CD8-positive, alpha-beta T cell (primary cell): ENCODE measurements at regions of chr3 and their contacts with region 1.

Region 1: DNA sequence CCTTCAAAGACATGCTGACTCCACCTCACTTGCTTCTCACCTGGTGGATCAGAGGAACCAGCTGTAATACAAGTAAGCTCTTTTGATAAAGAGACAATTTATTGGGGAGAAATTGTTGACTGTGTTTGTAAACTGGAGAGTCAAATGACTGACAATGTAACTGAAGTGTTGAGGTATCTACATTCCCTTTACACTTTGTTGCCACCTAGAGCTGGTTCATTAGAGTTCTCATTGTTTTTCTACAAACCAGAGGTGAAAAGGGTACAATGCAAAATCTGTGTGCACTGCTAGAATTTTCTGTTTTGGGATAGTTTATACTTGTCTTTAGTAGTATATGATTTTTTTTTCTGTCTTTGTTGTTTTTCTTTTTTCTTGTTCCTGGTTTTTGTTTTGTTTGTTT is 8.7 kb upstream of the LRRC58 start:
- DNase-seq: peak in 2 of 9 experiments; percentile 7 to 22
- ATAC-seq: no peak
- H3K4me3 ChIP-seq: no peak overlapping the region
- H3K4me3 Mint-ChIP-seq: no peak overlapping the region
- H3K27ac ChIP-seq: no peak overlapping the region
- H3K27ac Mint-ChIP-seq: no peak overlapping the region
- H3K4me1 ChIP-seq: no peaks in the 10 kb centered on the region
- H3K4me1 Mint-ChIP-seq: no peaks in the 10 kb centered on the region
- H3K27me3 ChIP-seq: no peaks in the 10 kb centered on the region
- H3K27me3 Mint-ChIP-seq: peaks cover 15% of the 10 kb centered on the region
- CTCF ChIP-seq: no peak

Region 2: DNA sequence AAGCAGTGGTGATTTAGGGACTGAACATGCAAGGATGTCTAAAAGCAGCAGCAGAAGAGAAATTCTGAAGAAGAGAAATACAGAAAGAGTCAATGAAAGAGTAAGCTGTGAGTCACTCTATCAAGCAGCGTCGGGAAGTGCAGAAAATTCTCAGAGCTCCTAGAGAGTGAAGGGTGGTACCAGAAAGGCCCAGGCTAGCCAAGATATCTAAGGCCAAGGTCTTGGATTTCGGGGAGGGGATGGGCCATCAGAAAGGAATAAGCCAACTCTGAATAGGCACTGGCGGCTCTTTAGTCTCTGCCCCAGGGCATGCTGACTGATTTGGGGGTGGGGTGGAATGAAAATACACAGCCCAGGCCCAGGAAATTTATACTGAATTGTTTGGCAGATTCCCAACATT is 143.6 kb before region 1 on chr3:
- CTCF ChIA-PET with region 1: no interaction called
- POLR2A ChIA-PET with region 1: no interaction called
- intact Hi-C with region 1: no loop called
- DNase-seq: no peak
- ATAC-seq: no peak
- H3K4me3 ChIP-seq: no peak overlapping the region
- H3K4me3 Mint-ChIP-seq: no peak overlapping the region
- H3K27ac ChIP-seq: no peak overlapping the region
- H3K27ac Mint-ChIP-seq: no peak overlapping the region
- H3K4me1 ChIP-seq: no peaks in the 10 kb centered on the region
- H3K4me1 Mint-ChIP-seq: no peaks in the 10 kb centered on the region
- H3K27me3 ChIP-seq: peaks cover 0 to 3% of the 10 kb centered on the region in 2 experiments
- H3K27me3 Mint-ChIP-seq: peaks cover 14% of the 10 kb centered on the region
- CTCF ChIP-seq: no peak

Region 3: DNA sequence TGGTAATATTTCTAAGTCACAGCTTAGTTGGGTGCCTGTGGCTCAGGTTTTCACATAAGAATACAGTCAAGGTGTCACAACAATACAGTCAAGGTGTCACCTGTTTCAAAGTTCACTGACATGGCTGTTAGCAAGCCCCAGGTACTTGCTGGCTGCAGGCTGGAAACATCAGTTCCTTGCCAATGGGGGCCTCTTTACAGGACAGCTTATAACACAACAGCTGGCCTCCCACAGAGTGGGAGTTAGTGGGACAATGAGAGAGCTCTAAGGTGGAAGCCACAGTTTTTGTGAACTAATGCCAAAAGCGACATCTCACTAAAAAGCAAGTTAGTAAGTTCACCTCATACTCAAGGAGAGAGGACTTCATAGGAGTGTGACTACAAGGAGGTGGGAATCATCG is 118.2 kb before region 1 on chr3:
- CTCF ChIA-PET with region 1: interaction called, 16 read pairs
- POLR2A ChIA-PET with region 1: no interaction called
- intact Hi-C with region 1: loop called (anchors 1 to 5 kb)
- DNase-seq: no peak
- ATAC-seq: no peak
- H3K4me3 ChIP-seq: no peak overlapping the region
- H3K4me3 Mint-ChIP-seq: no peak overlapping the region
- H3K27ac ChIP-seq: no peak overlapping the region
- H3K27ac Mint-ChIP-seq: no peak overlapping the region
- H3K4me1 ChIP-seq: no peaks in the 10 kb centered on the region
- H3K4me1 Mint-ChIP-seq: no peaks in the 10 kb centered on the region
- H3K27me3 ChIP-seq: peaks cover 0 to 2% of the 10 kb centered on the region in 2 experiments
- H3K27me3 Mint-ChIP-seq: peaks cover 31% of the 10 kb centered on the region
- CTCF ChIP-seq: no peak

Region 4: DNA sequence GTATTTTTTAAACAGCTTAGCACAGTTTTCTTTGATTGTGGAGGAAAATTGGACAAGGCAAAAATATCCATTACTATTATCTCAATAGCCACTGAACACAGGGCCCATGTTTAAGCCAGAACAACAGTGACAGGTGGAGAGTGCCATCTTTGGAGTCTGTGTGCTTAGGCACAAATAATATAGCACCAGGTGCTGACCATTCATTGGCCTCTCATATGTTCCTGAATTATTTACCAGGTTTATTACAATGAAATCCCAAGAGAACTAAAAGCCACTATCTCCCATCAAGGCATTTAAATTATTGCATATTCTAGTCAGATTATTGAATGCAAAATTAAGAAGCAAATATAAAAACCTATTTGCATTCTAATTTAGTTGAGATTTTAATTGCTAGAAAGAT is 112.4 kb before region 1 on chr3:
- CTCF ChIA-PET with region 1: interaction called, 16 read pairs
- POLR2A ChIA-PET with region 1: no interaction called
- intact Hi-C with region 1: loop called (anchors 1 to 5 kb)
- DNase-seq: no peak
- ATAC-seq: no peak
- H3K4me3 ChIP-seq: no peak overlapping the region
- H3K4me3 Mint-ChIP-seq: no peak overlapping the region
- H3K27ac ChIP-seq: no peak overlapping the region
- H3K27ac Mint-ChIP-seq: no peak overlapping the region
- H3K4me1 ChIP-seq: no peaks in the 10 kb centered on the region
- H3K4me1 Mint-ChIP-seq: no peaks in the 10 kb centered on the region
- H3K27me3 ChIP-seq: peaks cover 0 to 3% of the 10 kb centered on the region in 2 experiments
- H3K27me3 Mint-ChIP-seq: peaks cover 17% of the 10 kb centered on the region
- CTCF ChIP-seq: no peak